Calu3 (cell line): ENCODE measurements at regions of chr3 and their contacts with region 1.

Region 1: DNA sequence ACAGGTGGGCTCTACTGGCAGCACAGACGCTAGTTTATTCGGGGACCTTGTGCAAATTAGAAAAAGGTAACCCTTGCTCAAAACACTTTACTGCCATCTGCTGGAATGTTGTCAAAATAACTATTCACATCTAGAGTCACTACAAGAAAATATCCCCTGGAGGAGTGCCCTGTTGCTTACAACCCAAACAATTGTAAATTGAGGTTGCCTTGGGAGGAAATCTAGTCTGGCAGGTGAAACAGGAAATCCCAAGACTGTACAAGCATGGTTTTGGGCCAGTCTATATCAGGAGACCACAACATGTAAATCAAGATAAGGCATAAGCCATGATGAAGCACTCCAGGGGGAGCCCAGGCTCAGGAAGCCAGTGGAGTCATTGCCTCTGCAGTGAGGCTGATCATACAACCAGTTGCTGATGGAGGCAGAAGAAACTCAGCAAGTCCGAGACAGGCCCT is 136.8 kb upstream of the ACP3 start:
- DNase-seq: peak; percentile 74
- H3K4me3 Mint-ChIP-seq: no peak overlapping the region
- H3K27ac Mint-ChIP-seq: peak overlapping the region; percentile 85
- H3K4me1 Mint-ChIP-seq: peaks cover 23% of the 10 kb centered on the region
- H3K27me3 Mint-ChIP-seq: no peaks in the 10 kb centered on the region
- CTCF ChIP-seq: peak; percentile 89

Region 2: GRCh38 chr3:131794766-131795388 is 385.5 kb before region 1 on chr3:
- CTCF ChIA-PET with region 1: no interaction called
- intact Hi-C with region 1: loop called (anchors 1 kb)
- DNase-seq: peak; percentile 77
- H3K4me3 Mint-ChIP-seq: no peak overlapping the region
- H3K27ac Mint-ChIP-seq: no peak overlapping the region
- H3K4me1 Mint-ChIP-seq: peaks cover 22% of the 10 kb centered on the region
- H3K27me3 Mint-ChIP-seq: no peaks in the 10 kb centered on the region
- CTCF ChIP-seq: peak; percentile 96

Region 3: DNA sequence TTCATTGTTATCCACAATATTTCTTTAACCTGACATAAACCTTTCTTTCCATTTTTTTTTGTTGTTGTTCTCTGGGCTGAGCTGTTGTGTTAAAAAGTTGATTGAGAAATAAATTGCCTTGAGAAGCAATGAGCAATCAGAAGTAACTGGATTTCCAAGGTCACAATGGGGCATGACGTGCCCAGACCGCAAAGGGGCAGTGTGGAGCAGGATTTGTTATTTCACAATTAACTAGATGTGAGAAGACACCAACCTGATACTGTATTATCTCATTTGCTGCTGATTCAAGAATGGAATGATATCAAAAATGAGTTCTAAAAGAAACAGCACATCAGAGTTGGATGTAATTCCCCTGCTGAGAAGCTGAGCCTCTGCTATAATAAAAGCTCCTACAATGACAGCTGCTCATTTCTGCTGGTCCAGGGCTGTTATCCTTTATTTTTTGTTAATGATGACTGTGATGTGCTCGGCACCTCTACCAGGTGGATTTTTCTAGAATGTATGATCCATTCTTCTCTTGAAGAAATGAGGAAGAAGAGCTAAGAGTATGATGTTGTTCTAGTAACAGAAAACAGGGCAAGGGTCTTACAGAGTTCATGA is 173.7 kb before region 1 on chr3:
- CTCF ChIA-PET with region 1: no interaction called
- intact Hi-C with region 1: loop called (anchors 1 kb)
- DNase-seq: peak; percentile 78
- H3K4me3 Mint-ChIP-seq: no peak overlapping the region
- H3K27ac Mint-ChIP-seq: no peak overlapping the region
- H3K4me1 Mint-ChIP-seq: peaks cover 33% of the 10 kb centered on the region
- H3K27me3 Mint-ChIP-seq: no peaks in the 10 kb centered on the region
- CTCF ChIP-seq: peak; percentile 86

Region 4: GRCh38 chr3:132210476-132211346 is 30.3 kb after region 1 on chr3:
- CTCF ChIA-PET with region 1: interaction called, 6 read pairs
- intact Hi-C with region 1: loop called (anchors 1 kb)
- DNase-seq: peak; percentile 84
- H3K4me3 Mint-ChIP-seq: no peak overlapping the region
- H3K27ac Mint-ChIP-seq: no peak overlapping the region
- H3K4me1 Mint-ChIP-seq: peaks cover 12% of the 10 kb centered on the region
- H3K27me3 Mint-ChIP-seq: no peaks in the 10 kb centered on the region
- CTCF ChIP-seq: peak; percentile 98